ENCODE measurements at regions of chr17 and their contacts with region 1.

Region 1: DNA sequence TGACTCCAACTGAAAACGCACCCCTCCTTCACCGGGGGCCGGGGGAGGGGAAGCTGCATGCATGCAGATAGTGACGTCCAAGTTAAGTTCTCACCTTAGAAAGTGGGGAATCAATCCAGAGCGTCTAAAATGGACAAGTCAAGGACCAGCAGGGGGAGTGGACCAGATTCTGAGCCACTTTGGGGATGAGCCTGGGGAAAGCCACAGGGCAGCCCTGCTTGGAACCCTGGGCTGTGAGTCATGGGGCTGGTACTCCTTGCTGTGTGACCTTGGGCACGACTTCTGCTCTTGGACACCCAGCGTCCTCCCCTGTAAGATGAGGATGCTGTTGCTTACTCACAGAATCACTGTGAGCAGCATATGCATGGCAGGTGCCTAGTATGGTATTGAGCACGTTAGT is 9.1 kb downstream of the TNFRSF13B start:
- DNase-seq: no peak
- ATAC-seq: no peak
- H3K4me3 ChIP-seq: 0 out of 2 replicates have a peak overlapping the region, but pooled peaks have one; percentile 0
- H3K27ac ChIP-seq: peak overlapping the region; percentile 92
- H3K4me1 ChIP-seq: peaks cover 54% of the 10 kb centered on the region
- H3K27me3 ChIP-seq: no peaks in the 10 kb centered on the region
- CTCF ChIP-seq: peak in 1 of 3 experiments; percentile 17; a peak in 1 of 6 replicates
- EP300 ChIP-seq: no peak
- POLR2A ChIP-seq: 0 out of 2 replicates have a peak, but pooled peaks have one; percentile 24
- RAD21 ChIP-seq: no peak

Region 2: DNA sequence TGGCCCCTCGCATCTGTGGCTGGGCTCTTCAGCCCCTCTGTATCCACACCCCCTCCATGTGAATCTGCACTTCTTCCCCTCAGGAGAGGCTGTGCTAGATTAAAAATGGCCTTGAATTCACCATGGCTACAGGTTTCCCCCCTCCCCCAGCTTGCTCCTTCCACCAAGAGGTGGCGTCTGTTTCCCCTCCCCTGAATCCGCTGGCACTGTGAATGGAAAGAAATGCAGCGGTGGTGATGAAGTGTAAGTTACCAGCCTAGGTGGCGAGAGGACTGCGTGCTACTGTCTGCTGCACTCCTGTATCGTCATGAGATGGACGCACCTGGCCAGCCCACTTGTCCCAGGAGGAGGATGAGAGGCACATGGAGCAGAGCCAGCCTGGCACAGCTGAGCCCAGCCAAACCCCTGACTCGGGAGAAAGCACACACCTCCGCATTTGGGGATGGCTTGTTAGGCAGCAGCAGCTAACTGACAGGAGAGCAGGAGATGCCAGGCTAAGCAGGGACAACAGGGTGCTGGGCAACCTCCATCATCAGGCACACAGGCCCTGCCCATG is 17.1 kb before region 1 on chr17:
- CTCF ChIA-PET with region 1: interaction called, 3 read pairs
- POLR2A ChIA-PET with region 1: interaction called, 3 read pairs
- RAD21 ChIA-PET with region 1: no interaction called
- SMC1A ChIA-PET with region 1: interaction called, 10 read pairs
- in situ Hi-C with region 1: no loop called
- intact Hi-C with region 1: loop called (anchors 2 kb)
- DNase-seq: no peak
- ATAC-seq: no peak
- H3K4me3 ChIP-seq: no peak overlapping the region
- H3K27ac ChIP-seq: peak overlapping the region; percentile 7; the same call in 1 of the 2 replicates
- H3K4me1 ChIP-seq: peaks cover 25% of the 10 kb centered on the region
- H3K27me3 ChIP-seq: no peaks in the 10 kb centered on the region
- CTCF ChIP-seq: peak in 1 of 3 experiments; percentile 16; a peak in 1 of 6 replicates
- EP300 ChIP-seq: no peak
- POLR2A ChIP-seq: no peak; the same call in 1 of the 2 replicates
- RAD21 ChIP-seq: no peak

Region 3: DNA sequence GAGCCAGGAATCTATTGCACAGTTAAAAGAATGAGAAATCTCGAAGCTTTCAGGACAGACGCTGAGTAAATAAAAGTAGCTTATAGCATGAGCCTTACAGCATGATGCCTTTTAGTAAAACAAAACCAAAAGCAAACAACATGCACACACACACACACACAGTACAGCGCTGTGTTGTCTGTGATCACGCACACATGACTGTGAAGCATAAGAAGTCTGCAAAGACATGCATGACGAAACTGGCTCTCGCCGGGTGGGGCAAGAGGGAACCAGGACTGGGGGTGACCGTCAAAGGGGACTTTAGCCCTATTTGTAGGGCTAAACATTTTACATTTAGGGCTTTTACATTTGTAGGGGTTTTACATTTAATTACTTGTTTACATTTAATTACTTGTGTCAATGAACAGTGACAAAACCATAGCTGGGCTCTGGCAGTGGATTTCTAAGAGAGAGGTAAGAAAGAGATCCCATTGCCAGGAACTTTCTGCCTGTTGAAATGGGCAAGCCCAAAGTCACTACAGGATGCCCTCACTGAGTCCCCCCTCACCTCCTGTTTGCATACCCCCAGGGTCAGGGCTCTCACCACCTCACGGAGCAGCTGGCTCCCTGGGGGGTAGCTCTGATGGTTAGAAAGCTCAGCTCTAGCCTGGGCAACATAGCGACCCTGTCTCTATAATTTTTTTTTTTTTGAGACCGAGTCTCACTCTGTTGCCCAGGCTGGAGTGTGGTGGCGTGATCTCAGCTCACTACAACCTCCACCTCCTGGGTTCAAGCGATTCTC is 11.1 kb after region 1 on chr17:
- CTCF ChIA-PET with region 1: interaction called, 72 read pairs
- POLR2A ChIA-PET with region 1: interaction called, 656 read pairs
- RAD21 ChIA-PET with region 1: interaction called, 913 read pairs
- SMC1A ChIA-PET with region 1: interaction called, 812 read pairs
- in situ Hi-C with region 1: no loop called
- intact Hi-C with region 1: loop called (anchors 1 kb)
- DNase-seq: peak; percentile 88
- ATAC-seq: peak; percentile 15
- H3K4me3 ChIP-seq: peak overlapping the region; percentile 4; the same call in 1 of the 2 replicates
- H3K27ac ChIP-seq: peak overlapping the region; percentile 92
- H3K4me1 ChIP-seq: peaks cover 58% of the 10 kb centered on the region
- H3K27me3 ChIP-seq: no peaks in the 10 kb centered on the region
- CTCF ChIP-seq: no peak
- EP300 ChIP-seq: peak in 1 of 2 experiments; percentile 56; a peak in 1 of 4 replicates
- POLR2A ChIP-seq: peak; percentile 52; the same call in 1 of the 2 replicates
- RAD21 ChIP-seq: peak; percentile 9; the same call in 1 of the 2 replicates

Region 4: GRCh38 chr17:17096438-17097178 is 133.8 kb after region 1 on chr17:
- CTCF ChIA-PET with region 1: no interaction called
- POLR2A ChIA-PET with region 1: no interaction called
- RAD21 ChIA-PET with region 1: no interaction called
- SMC1A ChIA-PET with region 1: no interaction called
- in situ Hi-C with region 1: no loop called
- intact Hi-C with region 1: no loop called
- DNase-seq: no peak
- ATAC-seq: no peak
- H3K4me3 ChIP-seq: no peak overlapping the region
- H3K27ac ChIP-seq: no peak overlapping the region
- H3K4me1 ChIP-seq: no peaks in the 10 kb centered on the region
- H3K27me3 ChIP-seq: no peaks in the 10 kb centered on the region
- CTCF ChIP-seq: no peak
- EP300 ChIP-seq: no peak
- POLR2A ChIP-seq: no peak
- RAD21 ChIP-seq: no peak

Region 5: DNA sequence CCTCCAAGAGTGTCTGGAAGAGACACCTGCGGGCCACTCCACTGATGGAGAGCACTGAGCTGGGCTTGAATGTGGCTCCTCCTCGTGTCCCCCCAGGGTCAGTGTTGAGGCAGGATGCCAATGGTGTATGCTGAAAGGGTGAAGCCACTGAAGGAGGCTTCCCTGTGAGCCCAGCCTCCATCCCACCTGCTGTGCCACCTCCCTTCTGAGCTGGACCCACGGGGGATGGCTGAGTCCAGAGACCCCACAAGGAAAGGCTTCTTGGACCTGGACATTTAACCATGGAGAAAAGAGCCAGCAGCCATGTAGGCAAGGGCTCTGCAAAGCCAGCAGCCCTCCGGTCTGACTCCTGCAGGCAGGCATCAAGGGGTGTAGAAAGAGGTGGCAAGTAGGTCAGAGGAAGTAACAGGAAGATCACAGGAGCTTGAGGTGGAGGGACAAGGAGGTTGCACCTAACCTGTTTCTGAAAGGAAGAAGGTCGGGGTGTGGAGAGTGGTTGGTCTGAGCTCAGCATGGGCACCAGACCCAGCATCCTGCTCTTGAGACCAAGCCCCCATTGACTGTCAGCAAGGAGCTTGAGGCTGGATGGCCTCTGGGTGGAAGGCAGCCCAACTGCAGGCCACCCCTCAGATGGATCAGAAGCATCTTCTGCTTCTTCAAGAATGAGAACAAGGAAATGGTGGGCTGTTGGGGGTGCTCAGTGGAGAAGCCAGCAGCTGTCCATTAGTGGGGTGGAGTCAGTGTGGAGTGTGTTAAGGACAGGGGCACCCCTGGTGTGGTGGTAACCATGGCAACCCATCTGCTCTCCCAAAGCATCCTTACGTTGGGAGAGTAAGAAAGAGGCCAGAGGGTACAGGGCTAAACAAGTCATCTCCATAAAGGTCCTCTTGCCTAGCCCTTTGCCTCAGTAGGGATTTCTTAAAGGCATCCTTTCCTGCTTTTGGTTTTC is 162.6 kb after region 1 on chr17:
- CTCF ChIA-PET with region 1: no interaction called
- POLR2A ChIA-PET with region 1: no interaction called
- RAD21 ChIA-PET with region 1: no interaction called
- SMC1A ChIA-PET with region 1: no interaction called
- in situ Hi-C with region 1: no loop called
- intact Hi-C with region 1: no loop called
- DNase-seq: no peak
- ATAC-seq: no peak
- H3K4me3 ChIP-seq: no peak overlapping the region
- H3K27ac ChIP-seq: no peak overlapping the region
- H3K4me1 ChIP-seq: peaks cover 5% of the 10 kb centered on the region; the same call in 1 of the 2 replicates
- H3K27me3 ChIP-seq: no peaks in the 10 kb centered on the region
- CTCF ChIP-seq: no peak
- EP300 ChIP-seq: no peak
- POLR2A ChIP-seq: no peak
- RAD21 ChIP-seq: no peak